ENCODE measurements at regions of chr1 and their contacts with region 1.

Region 1: DNA sequence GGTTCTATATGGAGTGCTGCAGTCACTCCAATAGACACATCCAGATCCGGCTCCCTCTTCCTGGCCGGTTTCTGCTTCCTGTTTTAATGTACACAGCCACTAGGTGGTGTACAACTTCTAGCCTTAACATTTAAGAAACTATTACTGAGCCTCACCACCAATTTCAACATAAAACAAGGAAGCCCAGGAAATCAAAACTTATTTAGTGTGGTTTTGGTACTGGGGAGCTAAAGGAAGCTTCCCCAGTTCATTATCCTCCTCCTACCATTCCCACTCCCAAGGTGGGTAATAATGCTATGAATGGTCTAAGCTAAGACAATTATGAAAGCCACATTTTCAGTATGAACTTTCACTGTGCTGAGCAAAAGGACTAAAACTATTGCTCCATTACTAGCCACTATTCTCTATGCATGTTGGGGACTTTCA is 25.5 kb upstream of the MTMR11 start:
- DNase-seq: peak; percentile 59
- ATAC-seq: peak; percentile 86
- H3K4me3 Mint-ChIP-seq: no peak overlapping the region
- H3K27ac Mint-ChIP-seq: peak overlapping the region; percentile 44
- H3K4me1 Mint-ChIP-seq: peaks cover 14% of the 10 kb centered on the region
- H3K27me3 Mint-ChIP-seq: no peaks in the 10 kb centered on the region

Region 2: GRCh38 chr1:150010393-150011115 is 48.4 kb after region 1 on chr1 and contains the start of gene OTUD7B:
- CTCF ChIA-PET with region 1: interaction called, 14 read pairs
- DNase-seq: peak; percentile 84
- ATAC-seq: peak; percentile 83
- H3K4me3 Mint-ChIP-seq: peak within 1 kb of the TSS; percentile 99
- H3K27ac Mint-ChIP-seq: peak within 1 kb of the TSS; percentile 92
- H3K4me1 Mint-ChIP-seq: peaks cover 32% of the 10 kb centered on the region
- H3K27me3 Mint-ChIP-seq: peaks cover 2% of the 10 kb centered on the region
- total RNA-seq, gene OTUD7B: 16.4 to 19.7 TPM

Region 3: GRCh38 chr1:150053926-150054325 is 91.8 kb after region 1 on chr1:
- CTCF ChIA-PET with region 1: interaction called, 47 read pairs
- DNase-seq: no peak
- ATAC-seq: no peak
- H3K4me3 Mint-ChIP-seq: no peak overlapping the region
- H3K27ac Mint-ChIP-seq: no peak overlapping the region
- H3K4me1 Mint-ChIP-seq: peaks cover 8% of the 10 kb centered on the region
- H3K27me3 Mint-ChIP-seq: peaks cover 10% of the 10 kb centered on the region

Region 4: GRCh38 chr1:150162862-150163706 is 200.9 kb after region 1 on chr1:
- CTCF ChIA-PET with region 1: interaction called, 11 read pairs
- DNase-seq: no peak
- ATAC-seq: no peak
- H3K4me3 Mint-ChIP-seq: no peak overlapping the region
- H3K27ac Mint-ChIP-seq: peak overlapping the region; percentile 50
- H3K4me1 Mint-ChIP-seq: peaks cover 68% of the 10 kb centered on the region
- H3K27me3 Mint-ChIP-seq: no peaks in the 10 kb centered on the region

Region 5: GRCh38 chr1:150168960-150169601 is 206.9 kb after region 1 on chr1:
- CTCF ChIA-PET with region 1: interaction called, 11 read pairs
- DNase-seq: peak; percentile 76
- ATAC-seq: peak; percentile 70
- H3K4me3 Mint-ChIP-seq: no peak overlapping the region
- H3K27ac Mint-ChIP-seq: no peak overlapping the region
- H3K4me1 Mint-ChIP-seq: peaks cover 19% of the 10 kb centered on the region
- H3K27me3 Mint-ChIP-seq: no peaks in the 10 kb centered on the region